H1 (cell line): ENCODE measurements at regions of chr2 and their contacts with region 1.

Region 1: DNA sequence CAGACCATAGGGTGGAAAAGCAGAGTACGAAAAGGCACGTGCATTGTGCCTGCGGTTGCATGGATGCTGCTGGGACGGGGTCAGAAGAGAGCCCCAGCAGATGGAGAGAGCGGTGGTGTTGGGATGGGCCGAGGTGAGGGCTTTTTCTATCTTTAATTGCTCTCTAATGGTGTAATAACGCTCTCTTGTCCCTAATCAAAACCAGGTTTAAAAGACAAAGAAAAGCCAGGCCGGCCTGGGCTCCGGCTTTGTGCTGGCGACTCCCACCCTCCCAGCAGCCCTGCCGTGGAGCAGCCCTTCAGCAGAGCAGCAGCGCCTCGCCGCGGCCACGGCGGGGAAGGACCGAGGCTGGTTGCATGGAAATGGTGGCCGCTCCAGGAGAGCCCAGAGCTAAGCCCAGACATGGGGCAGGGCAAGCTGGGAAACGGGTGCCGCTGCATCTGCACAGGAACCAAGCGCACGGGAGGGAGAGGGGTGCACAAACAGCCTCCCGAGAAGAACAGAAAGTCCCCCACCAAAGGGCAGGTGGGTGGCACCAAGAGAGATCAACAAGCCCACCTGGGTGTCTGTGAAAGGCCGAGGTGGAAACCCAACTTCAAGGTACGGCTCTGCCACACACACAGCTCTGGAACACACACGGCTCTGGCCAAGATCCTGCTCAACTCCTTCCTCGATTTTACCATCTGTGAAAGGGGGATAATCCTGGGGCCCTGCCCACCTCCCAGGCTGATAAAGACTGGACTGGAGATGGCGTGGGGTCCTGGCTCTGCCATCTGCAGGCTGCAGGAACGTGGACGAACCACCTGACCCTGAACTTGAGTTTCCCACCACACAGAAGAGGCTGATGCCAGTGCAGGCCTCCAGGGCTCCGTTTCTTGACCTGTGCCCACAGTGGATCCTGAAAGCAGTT is 15.0 kb downstream of the HS1BP3 start:
- DNase-seq: peak; percentile 70 to 96
- H3K4me3 ChIP-seq: no peak overlapping the region
- H3K27ac ChIP-seq: no peak overlapping the region
- H3K4me1 ChIP-seq: peaks cover 0 to 8% (median 3%) of the 10 kb centered on the region in 4 experiments; a peak in 4 of 7 replicates
- H3K27me3 ChIP-seq: no peaks in the 10 kb centered on the region
- CTCF ChIP-seq: peak in 2 of 3 experiments; percentile 98; a peak in 3 of 4 replicates
- EP300 ChIP-seq: no peak
- POLR2A ChIP-seq: no peak
- RAD21 ChIP-seq: peak; percentile 100

Region 2: GRCh38 chr2:20411361-20411894 is 224.5 kb before region 1 on chr2:
- CTCF ChIA-PET with region 1: interaction called, 261 read pairs
- POLR2A ChIA-PET with region 1: interaction called, 3 read pairs
- DNase-seq: peak; percentile 56 to 90
- H3K4me3 ChIP-seq: no peak overlapping the region
- H3K27ac ChIP-seq: no peak overlapping the region
- H3K4me1 ChIP-seq: peaks cover 0 to 2% (median 0%) of the 10 kb centered on the region in 4 experiments; a peak in 1 of 7 replicates
- H3K27me3 ChIP-seq: no peaks in the 10 kb centered on the region
- CTCF ChIP-seq: peak; percentile 84 to 98 (median 89)
- EP300 ChIP-seq: no peak
- POLR2A ChIP-seq: no peak
- RAD21 ChIP-seq: peak; percentile 73 to 81

Region 3: DNA sequence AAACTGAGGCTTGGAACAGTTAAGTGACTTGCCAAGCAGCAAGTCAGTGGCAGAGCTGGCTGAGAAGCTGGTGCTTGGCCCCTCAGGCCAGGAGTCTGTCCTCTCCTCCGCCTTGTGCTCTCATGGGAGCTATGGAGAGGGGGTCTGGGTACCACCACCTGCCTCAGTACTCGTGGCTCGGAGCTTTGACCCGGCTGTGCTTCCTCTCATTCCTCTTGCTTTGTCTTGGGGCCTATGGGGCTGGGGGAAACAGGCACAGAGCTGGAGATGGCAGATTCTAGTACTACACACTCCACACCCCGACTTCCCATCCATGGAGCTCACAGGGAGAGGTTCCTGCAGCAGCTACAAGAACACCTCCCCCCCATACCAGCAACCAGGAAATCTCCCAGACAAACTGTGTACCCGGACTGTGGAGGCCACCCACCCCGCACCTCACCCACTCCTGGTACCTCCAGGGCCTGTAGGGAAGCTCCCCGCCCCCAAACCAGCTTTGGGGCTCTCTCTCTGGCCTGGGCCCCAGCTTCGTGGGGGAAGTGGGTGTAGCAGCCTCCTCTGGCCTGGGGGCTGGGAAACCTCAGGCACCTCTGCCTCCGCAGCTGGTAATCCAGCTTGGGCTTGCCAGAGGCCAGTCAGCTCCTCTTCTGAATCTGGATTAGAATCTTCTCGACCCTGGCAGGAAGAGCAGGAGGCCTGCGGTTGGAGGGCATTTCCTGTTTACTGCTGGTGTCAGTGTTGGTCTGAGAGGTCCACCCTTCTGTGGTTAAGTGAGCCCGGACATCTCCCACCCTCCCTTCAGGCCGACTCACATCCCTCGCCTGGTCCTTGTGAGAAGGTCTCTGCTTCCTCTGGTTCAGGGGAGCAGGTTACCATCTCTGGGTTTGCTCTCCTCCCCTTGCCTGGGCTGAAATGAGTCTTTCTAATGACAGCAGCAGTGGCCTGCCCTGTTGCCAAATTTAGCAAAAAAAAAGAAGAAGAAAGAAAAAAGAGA is 211.3 kb before region 1 on chr2:
- CTCF ChIA-PET with region 1: interaction called, 261 read pairs
- POLR2A ChIA-PET with region 1: no interaction called
- DNase-seq: no peak
- H3K4me3 ChIP-seq: no peak overlapping the region
- H3K27ac ChIP-seq: no peak overlapping the region; the same call in 1 of the 2 replicates
- H3K4me1 ChIP-seq: no peaks in the 10 kb centered on the region; a peak in 1 of 7 replicates
- H3K27me3 ChIP-seq: no peaks in the 10 kb centered on the region
- CTCF ChIP-seq: no peak
- EP300 ChIP-seq: no peak
- POLR2A ChIP-seq: no peak
- RAD21 ChIP-seq: no peak

Region 4: GRCh38 chr2:20561701-20562454 is 74.1 kb before region 1 on chr2:
- CTCF ChIA-PET with region 1: interaction called, 15 read pairs
- POLR2A ChIA-PET with region 1: no interaction called
- DNase-seq: no peak
- H3K4me3 ChIP-seq: no peak overlapping the region
- H3K27ac ChIP-seq: no peak overlapping the region
- H3K4me1 ChIP-seq: peaks cover 6 to 19% (median 11%) of the 10 kb centered on the region in 4 experiments; a peak in 6 of 7 replicates
- H3K27me3 ChIP-seq: no peaks in the 10 kb centered on the region; a peak in 2 of 7 replicates
- CTCF ChIP-seq: no peak
- EP300 ChIP-seq: no peak
- POLR2A ChIP-seq: no peak
- RAD21 ChIP-seq: no peak

Region 5: DNA sequence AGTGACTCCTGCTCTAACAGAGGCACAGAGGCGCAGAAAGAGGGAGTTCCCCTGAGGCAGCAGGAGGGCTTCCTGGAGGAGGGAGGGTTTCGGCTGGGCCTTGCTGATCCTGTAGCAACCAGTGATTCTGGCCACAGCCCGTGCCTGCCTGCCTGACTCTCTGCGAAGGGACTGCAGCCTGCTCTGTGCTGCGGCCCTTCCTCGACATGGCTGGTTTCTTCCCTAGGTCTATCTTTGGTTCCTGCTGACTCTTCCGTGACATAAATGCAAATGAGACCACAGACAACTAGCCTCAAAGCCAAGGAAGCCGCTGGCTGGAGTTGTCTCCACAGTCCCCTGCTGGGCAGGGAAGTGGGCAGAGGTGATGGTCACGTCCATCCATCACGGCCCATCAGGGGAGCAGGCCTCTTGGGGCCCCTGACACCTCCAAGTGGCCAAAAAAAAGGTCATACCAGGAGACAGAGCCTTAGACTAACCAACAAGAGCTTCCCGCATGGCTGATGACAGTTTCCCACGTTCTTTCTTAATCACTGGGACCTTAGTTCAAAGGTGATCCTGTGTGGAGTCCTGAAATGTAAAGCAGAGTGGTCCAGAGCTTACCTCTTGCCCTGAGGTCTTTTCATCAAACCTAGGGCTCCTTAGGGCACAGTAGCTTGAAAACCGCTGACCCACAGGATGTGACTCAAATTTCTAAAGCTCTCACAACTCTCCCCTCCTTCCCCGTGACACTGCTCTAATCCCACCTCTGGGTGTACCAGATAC is 40.3 kb before region 1 on chr2:
- CTCF ChIA-PET with region 1: interaction called, 82 read pairs
- POLR2A ChIA-PET with region 1: interaction called, 3 read pairs
- DNase-seq: no peak
- H3K4me3 ChIP-seq: no peak overlapping the region
- H3K27ac ChIP-seq: no peak overlapping the region
- H3K4me1 ChIP-seq: peaks cover 4 to 10% (median 5%) of the 10 kb centered on the region in 4 experiments; a peak in 6 of 7 replicates
- H3K27me3 ChIP-seq: peaks cover 0 to 2% (median 0%) of the 10 kb centered on the region in 4 experiments; a peak in 1 of 7 replicates
- CTCF ChIP-seq: no peak
- EP300 ChIP-seq: no peak
- POLR2A ChIP-seq: no peak
- RAD21 ChIP-seq: no peak

Region 6: DNA sequence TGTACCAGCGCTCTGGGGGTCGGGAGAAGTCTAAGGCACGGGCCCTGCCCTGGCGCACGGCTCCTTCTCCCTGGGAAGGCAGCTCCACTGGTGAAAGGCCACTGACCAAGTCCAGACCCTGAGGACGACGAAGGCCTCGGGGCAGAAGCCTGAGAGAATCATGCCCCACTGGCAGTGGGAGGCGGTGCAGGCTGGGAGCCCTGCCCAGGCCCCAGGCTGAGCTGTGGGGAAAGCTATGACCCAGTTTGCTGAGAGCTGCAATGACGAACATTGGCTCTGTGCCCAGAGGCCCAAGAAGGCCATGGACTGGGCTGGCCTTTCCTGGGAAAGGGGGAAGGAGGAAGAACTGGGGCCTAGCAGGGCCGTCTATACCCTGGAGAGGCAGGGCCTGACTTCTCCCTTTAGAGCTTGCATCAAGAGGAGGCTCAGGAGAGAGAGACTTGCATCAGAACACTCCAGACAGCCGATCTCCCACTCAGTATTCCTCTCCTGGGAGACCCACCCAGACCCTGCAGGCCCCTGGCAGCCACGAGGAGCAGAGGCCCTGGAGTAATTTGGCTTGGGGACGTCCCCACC is 17.9 kb before region 1 on chr2:
- CTCF ChIA-PET with region 1: interaction called, 47 read pairs
- POLR2A ChIA-PET with region 1: interaction called, 3 read pairs
- DNase-seq: no peak
- H3K4me3 ChIP-seq: no peak overlapping the region
- H3K27ac ChIP-seq: no peak overlapping the region
- H3K4me1 ChIP-seq: peaks cover 0 to 20% (median 14%) of the 10 kb centered on the region in 4 experiments; a peak in 6 of 7 replicates
- H3K27me3 ChIP-seq: no peaks in the 10 kb centered on the region; a peak in 1 of 7 replicates
- CTCF ChIP-seq: peak in 2 of 3 experiments; percentile 7 to 24; a peak in 2 of 4 replicates
- EP300 ChIP-seq: no peak
- POLR2A ChIP-seq: no peak
- RAD21 ChIP-seq: peak in 1 of 2 experiments; percentile 16; a peak in 1 of 4 replicates

Region 7: GRCh38 chr2:20650880-20651730 is 15.2 kb after region 1 on chr2 and contains the start of gene HS1BP3:
- CTCF ChIA-PET with region 1: interaction called, 32 read pairs
- POLR2A ChIA-PET with region 1: interaction called, 3 read pairs
- DNase-seq: peak in 1 of 2 experiments; percentile 91
- H3K4me3 ChIP-seq: peak within 1 kb of the TSS; percentile 47 to 68 (median 56)
- H3K27ac ChIP-seq: no peak within 1 kb of the TSS
- H3K4me1 ChIP-seq: peaks cover 0 to 11% (median 7%) of the 10 kb centered on the region in 4 experiments; a peak in 5 of 7 replicates
- H3K27me3 ChIP-seq: peaks cover 0 to 4% (median under 1%) of the 10 kb centered on the region in 4 experiments; a peak in 4 of 7 replicates
- CTCF ChIP-seq: peak in 2 of 3 experiments; percentile 87 to 92; a peak in 3 of 4 replicates
- EP300 ChIP-seq: peak in 1 of 2 experiments; percentile 60; a peak in 1 of 3 replicates
- POLR2A ChIP-seq: peak in 1 of 2 experiments; percentile 74; a peak in 2 of 3 replicates
- RAD21 ChIP-seq: peak; percentile 49 to 76
- total RNA-seq, gene HS1BP3: 11.1 and 11.2 TPM in 2 replicates

Region 8: DNA sequence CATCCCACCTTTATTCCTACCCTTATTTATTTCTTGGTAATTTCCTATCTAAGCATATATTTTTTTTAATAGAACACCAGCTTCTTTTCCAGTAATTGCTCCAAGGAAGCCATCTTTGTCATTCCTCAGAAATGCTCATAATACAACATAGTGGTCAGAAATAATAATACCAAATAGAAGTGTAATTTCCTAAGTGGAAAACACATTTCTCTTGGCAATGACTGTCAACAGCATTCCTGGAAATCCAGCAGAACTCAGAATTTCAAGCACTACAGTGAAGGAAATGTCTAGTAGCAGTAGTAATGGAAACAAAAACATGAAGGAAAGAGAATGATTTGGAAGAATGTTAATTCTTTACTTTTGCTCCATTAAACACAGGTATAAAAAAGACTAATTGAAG is 87.6 kb after region 1 on chr2:
- CTCF ChIA-PET with region 1: no interaction called
- POLR2A ChIA-PET with region 1: no interaction called
- DNase-seq: no peak
- H3K4me3 ChIP-seq: no peak overlapping the region
- H3K27ac ChIP-seq: no peak overlapping the region
- H3K4me1 ChIP-seq: no peaks in the 10 kb centered on the region
- H3K27me3 ChIP-seq: no peaks in the 10 kb centered on the region
- CTCF ChIP-seq: no peak
- EP300 ChIP-seq: no peak
- POLR2A ChIP-seq: no peak
- RAD21 ChIP-seq: no peak

Region 9: DNA sequence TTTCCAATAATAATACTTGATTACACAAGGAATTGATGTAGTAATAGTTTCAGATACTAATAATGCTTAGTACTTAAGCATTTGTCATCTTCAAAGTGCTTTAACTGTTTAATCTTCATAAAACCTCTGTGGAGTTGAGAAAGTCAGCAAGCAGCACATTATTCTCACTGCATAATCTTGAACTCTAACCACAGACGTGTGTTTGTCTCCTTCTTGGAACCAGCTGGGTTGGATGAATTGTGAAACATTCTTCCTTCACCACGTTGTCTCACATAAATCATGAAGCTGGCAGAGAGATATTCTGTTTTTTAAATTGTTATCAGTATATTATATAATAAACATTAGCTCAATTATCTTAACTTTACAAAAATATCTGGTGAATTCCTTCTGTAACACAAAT is 242.0 kb after region 1 on chr2:
- CTCF ChIA-PET with region 1: no interaction called
- POLR2A ChIA-PET with region 1: no interaction called
- DNase-seq: no peak
- H3K4me3 ChIP-seq: no peak overlapping the region
- H3K27ac ChIP-seq: no peak overlapping the region
- H3K4me1 ChIP-seq: no peaks in the 10 kb centered on the region; a peak in 1 of 7 replicates
- H3K27me3 ChIP-seq: no peaks in the 10 kb centered on the region
- CTCF ChIP-seq: no peak
- EP300 ChIP-seq: no peak
- POLR2A ChIP-seq: no peak
- RAD21 ChIP-seq: no peak

Region 10: DNA sequence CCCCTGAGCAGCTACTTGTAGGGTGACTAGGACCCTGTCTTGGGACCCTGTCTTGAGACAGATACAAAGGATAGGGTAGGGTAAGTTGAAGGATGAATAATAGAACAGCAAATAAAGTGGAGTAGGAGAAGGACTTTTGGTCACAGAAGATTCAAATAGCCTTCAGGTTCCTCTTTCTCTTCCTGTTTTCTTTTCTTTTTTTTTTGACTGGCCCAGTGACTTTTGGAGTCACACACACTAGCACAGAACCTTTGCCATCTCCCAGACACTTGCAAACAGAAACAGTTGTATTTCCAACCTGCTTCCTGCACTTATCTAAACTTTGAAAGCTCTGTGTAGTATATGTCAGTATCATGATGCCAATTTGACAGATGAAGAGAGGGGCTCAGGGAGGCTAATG is 596.1 kb after region 1 on chr2:
- CTCF ChIA-PET with region 1: no interaction called
- POLR2A ChIA-PET with region 1: no interaction called
- DNase-seq: no peak
- H3K4me3 ChIP-seq: no peak overlapping the region
- H3K27ac ChIP-seq: no peak overlapping the region
- H3K4me1 ChIP-seq: no peaks in the 10 kb centered on the region; a peak in 1 of 7 replicates
- H3K27me3 ChIP-seq: no peaks in the 10 kb centered on the region
- CTCF ChIP-seq: no peak
- EP300 ChIP-seq: no peak
- POLR2A ChIP-seq: no peak
- RAD21 ChIP-seq: no peak